Mammary epithelial cell (primary cell): ENCODE measurements at regions of chr9 and their contacts with region 1.

Region 1: DNA sequence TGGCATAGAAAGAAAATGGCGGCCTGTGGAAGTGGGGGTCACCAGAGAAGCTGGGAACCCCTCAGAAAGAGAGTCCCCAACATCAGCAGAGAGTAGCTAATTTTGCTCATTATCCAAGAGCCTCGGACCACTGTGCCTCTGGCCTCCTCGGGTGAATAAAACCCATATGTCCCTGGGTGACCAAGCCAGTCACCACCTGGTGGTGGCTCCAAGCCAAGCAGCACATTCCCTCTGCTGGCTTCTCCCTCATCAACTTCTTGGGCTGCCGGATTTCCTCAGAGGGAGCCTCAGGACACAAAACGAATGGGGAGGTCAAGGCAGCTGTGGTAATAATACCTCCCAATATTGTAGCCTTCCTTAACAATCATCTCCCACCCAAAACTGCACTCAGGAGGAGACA is 242.5 kb downstream of the NFIB start:
- DNase-seq: no peak
- H3K4me3 ChIP-seq: no peak overlapping the region
- H3K27ac ChIP-seq: no peak overlapping the region
- H3K4me1 ChIP-seq: peaks cover 19% of the 10 kb centered on the region
- H3K27me3 ChIP-seq: no peaks in the 10 kb centered on the region
- CTCF ChIP-seq: no peak

Region 2: DNA sequence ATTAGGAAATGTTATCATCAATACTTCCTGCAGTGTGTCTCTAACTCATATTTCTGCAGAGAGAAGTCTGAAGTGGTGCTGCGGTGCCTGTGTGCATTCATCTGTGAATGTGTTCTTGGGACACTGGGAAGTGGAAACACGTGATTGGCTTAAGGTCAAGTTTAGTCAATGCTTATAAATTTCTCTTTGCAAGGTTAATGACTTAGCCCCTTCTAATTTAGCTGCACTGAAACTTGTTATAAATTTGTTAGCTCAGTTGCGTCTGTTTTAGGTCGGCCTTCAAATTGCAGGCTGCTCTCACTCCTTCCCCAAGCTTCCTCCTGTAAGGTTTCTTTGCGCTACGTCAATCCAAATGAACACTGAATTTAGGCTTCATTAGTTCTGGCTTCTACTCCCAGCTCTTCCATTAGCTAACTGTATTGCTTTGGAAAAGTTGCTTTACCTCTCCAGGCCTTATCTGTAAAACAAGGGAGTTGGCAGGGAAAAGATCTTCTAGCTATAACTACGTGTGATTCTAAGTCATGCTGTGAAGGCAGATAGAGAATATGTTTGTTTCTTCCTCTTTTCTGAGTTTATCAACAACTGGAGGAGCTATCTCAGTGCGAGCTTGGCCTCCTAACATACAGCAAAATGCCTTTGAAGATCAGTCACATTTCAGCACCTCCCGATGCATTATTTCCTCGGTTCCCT is 99.4 kb before region 1 on chr9:
- CTCF ChIA-PET with region 1: no interaction called
- dilution Hi-C with region 1: loop called (anchors 5 kb)
- in situ Hi-C with region 1: no loop called
- intact Hi-C with region 1: no loop called
- DNase-seq: no peak
- H3K4me3 ChIP-seq: no peak overlapping the region
- H3K27ac ChIP-seq: no peak overlapping the region
- H3K4me1 ChIP-seq: no peaks in the 10 kb centered on the region
- H3K27me3 ChIP-seq: no peaks in the 10 kb centered on the region
- CTCF ChIP-seq: no peak